Activated CD4-positive, alpha-beta T cell treated with anti-CD3 and anti-CD28 coated beads for 36 hours (primary cell): ENCODE measurements at regions of chr5 and their contacts with region 1.

Region 1: DNA sequence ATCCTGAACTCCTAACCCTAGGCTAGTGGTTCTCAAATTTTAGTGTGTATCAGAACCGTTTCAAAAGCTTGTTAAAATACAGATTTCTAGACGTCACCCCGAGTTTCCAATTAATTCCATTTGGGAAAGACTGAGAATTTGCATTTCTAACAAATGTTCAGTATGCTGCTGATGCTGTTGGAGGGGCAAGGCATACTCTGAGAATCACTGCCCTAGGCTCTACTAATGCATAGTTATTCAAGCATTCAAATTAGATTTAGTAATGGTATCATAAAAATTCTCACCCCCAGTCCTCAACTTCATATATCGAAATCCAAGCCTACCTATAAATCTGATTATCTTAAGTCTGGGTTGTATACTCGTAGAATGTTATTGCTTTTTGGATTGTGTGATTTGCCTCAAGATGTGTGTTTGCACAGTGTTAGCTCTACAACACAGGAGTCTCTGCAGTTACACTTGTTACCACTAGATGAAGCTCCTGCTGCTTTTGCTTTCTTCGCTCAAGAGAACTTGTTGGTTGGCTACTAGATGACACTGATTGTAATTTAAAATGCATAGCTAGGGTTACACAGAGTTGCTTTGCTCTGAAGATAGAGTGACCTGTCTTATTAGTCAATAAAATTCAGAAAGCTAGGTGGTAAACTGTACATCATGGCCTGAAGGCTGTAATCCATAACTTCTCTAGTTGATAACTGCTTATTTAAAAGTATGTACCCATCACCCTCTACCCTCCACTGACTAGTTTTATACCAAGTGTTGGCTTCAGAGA is 7.5 kb upstream of the ERAP2 start:
- DNase-seq: no peak
- ATAC-seq: peak; percentile 81
- H3K4me3 Mint-ChIP-seq: no peak overlapping the region
- H3K27ac Mint-ChIP-seq: peak overlapping the region; percentile 90
- H3K4me1 Mint-ChIP-seq: peaks cover 54% of the 10 kb centered on the region
- H3K27me3 Mint-ChIP-seq: peaks cover 1% of the 10 kb centered on the region

Region 2: GRCh38 chr5:96582343-96582742 is 286.4 kb before region 1 on chr5:
- CTCF ChIA-PET with region 1: no interaction called
- POLR2A ChIA-PET with region 1: no interaction called
- intact Hi-C with region 1: no loop called
- DNase-seq: no peak
- ATAC-seq: no peak
- H3K4me3 Mint-ChIP-seq: no peak overlapping the region
- H3K27ac Mint-ChIP-seq: no peak overlapping the region
- H3K4me1 Mint-ChIP-seq: peaks cover 6% of the 10 kb centered on the region
- H3K27me3 Mint-ChIP-seq: peaks cover 15% of the 10 kb centered on the region

Region 3: DNA sequence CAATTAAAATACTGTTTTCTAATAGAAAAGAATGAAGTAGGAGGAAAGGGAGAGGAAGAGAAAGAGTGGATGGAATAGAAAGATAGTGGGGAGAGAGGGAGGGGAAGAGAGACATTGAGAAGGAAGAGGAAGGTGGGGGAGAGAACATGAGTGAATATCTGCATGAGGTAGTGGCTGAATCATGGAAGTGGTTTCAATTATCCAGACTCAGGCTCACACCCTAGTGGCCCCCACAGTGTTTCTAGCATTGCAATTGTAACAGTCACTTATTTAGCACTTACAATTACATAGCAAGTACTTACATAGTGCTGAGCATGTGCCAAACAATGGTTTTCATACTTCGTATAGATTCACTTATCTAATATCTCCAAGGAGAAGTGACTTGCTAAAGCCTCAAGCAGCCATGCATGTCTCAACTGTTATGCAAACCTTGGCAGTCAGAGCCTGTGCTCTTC is 133.9 kb before region 1 on chr5:
- CTCF ChIA-PET with region 1: no interaction called
- POLR2A ChIA-PET with region 1: no interaction called
- intact Hi-C with region 1: no loop called
- DNase-seq: no peak
- ATAC-seq: no peak
- H3K4me3 Mint-ChIP-seq: no peak overlapping the region
- H3K27ac Mint-ChIP-seq: no peak overlapping the region
- H3K4me1 Mint-ChIP-seq: peaks cover 7% of the 10 kb centered on the region
- H3K27me3 Mint-ChIP-seq: no peaks in the 10 kb centered on the region

Region 4: DNA sequence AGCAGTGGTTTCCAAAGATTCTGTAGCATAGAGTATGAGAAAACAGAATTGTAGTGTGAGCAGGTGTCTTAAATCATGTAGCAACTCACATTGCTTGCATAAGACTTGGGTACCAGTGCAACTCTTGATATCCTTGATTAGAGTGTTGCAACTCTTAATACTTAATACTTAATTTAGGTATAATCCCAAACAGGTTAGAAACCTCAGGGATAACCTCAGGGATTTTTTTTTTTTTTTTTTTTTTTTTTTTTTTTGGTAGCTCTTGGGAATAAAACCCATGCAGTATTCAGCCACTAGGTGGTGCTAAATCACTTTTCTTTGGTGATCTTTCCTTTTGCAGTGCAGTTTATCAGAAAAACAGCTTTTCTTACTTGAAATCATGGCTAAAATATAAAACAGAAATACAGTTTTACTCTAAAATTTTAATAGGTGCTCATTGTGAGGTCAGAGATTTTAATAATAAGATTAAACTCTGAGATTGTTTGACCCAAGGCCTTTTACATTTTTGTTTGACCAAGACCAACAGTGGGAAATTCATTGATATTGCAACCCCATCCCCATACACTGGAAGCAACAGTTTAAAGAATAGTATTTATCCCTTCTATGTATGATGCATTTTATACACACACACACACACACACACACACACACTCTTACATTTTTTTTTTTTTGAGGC is 116.3 kb before region 1 on chr5:
- CTCF ChIA-PET with region 1: interaction called, 14 read pairs
- POLR2A ChIA-PET with region 1: no interaction called
- intact Hi-C with region 1: loop called in 1 of 2 experiments (anchors 1 kb)
- DNase-seq: peak; percentile 36
- ATAC-seq: no peak
- H3K4me3 Mint-ChIP-seq: no peak overlapping the region
- H3K27ac Mint-ChIP-seq: no peak overlapping the region
- H3K4me1 Mint-ChIP-seq: peaks cover 18% of the 10 kb centered on the region
- H3K27me3 Mint-ChIP-seq: no peaks in the 10 kb centered on the region

Region 5: GRCh38 chr5:96885518-96886338 is 16.9 kb after region 1 on chr5:
- CTCF ChIA-PET with region 1: interaction called, 11 read pairs
- POLR2A ChIA-PET with region 1: interaction called, 8 read pairs
- intact Hi-C with region 1: no loop called
- DNase-seq: peak; percentile 49
- ATAC-seq: peak; percentile 85
- H3K4me3 Mint-ChIP-seq: peak overlapping the region; percentile 32
- H3K27ac Mint-ChIP-seq: peak overlapping the region; percentile 89
- H3K4me1 Mint-ChIP-seq: peaks cover 52% of the 10 kb centered on the region
- H3K27me3 Mint-ChIP-seq: no peaks in the 10 kb centered on the region

Region 6: DNA sequence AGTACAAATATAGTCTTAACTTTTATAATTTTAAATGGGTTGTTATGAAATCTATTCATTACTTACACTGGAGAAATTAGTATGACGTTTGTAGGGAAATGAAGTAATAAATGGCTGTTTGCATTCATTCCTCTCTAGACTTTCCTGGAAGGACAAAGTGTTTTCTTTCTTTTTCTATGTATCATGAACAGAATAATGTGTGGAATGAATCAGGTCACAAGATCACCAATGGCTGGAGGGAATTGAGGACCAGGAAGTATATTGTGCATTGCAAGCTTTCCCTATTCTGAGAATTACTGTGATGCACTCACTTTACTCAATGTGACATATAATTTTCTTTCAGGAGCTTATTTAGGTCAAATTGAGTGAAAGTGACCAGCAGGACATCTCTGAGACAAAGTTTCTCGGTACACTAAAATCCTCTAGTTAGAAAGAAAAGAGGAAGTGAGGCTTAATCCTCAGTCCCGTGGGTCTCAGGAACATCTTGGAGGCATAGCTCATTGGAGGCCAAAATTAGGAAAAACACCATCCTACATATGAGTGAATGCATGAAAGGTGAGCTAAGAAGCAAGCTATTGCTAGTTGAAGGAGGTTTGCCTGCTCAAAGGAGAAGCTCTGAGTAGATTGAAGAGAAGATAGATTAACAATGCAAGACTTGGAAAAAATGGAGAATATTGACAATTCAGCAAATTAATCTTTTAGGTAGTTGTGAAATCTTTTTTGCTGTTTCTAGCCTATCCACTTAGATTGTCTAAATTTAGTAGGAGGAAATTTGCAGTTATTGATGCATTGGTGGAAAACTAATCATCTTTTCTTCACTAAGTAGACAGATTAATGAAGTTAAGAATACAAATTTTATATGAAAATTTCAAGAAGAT is 35.5 kb after region 1 on chr5:
- CTCF ChIA-PET with region 1: interaction called, 13 read pairs
- POLR2A ChIA-PET with region 1: no interaction called
- intact Hi-C with region 1: loop called in 1 of 2 experiments (anchors 5 kb)
- DNase-seq: no peak
- ATAC-seq: peak; percentile 61
- H3K4me3 Mint-ChIP-seq: no peak overlapping the region
- H3K27ac Mint-ChIP-seq: no peak overlapping the region
- H3K4me1 Mint-ChIP-seq: peaks cover 9% of the 10 kb centered on the region
- H3K27me3 Mint-ChIP-seq: no peaks in the 10 kb centered on the region

Region 7: GRCh38 chr5:96963267-96963666 is 94.5 kb after region 1 on chr5:
- CTCF ChIA-PET with region 1: interaction called, 14 read pairs
- POLR2A ChIA-PET with region 1: no interaction called
- intact Hi-C with region 1: no loop called
- DNase-seq: peak; percentile 46
- ATAC-seq: peak; percentile 76
- H3K4me3 Mint-ChIP-seq: peak overlapping the region; percentile 64
- H3K27ac Mint-ChIP-seq: peak overlapping the region; percentile 97
- H3K4me1 Mint-ChIP-seq: peaks cover 75% of the 10 kb centered on the region
- H3K27me3 Mint-ChIP-seq: no peaks in the 10 kb centered on the region

Region 8: DNA sequence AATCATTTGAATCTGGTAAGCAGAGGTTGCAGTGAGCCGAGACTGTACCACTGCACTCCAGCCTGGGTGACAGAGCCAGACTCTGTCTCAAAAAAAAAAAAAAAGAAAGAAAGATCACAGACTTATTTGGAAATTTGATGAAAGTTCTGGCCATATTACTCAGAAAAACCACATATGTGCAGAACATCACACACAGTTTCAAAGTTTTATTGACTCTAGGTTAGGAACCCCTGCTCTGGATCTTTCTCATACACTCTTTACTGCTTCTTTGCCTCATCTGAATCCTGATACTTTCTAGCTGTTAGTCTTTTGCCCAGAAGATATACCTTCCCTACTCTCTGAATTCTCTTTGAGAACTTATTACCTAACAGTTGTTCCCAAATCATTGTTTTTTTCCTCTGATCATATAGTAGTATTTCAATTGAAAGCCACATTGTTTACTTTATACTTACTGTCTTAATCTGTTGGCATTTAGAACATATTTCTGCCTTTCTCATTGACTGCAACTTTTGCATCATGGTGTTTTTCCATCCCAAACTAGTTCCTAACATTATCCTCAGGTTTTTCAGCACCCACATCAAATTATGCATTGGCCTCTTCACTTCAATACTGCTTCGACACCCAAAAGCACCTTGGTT is 135.8 kb after region 1 on chr5:
- CTCF ChIA-PET with region 1: interaction called, 3 read pairs
- POLR2A ChIA-PET with region 1: no interaction called
- intact Hi-C with region 1: loop called (anchors 5 kb)
- DNase-seq: peak; percentile 39
- ATAC-seq: peak; percentile 85
- H3K4me3 Mint-ChIP-seq: no peak overlapping the region
- H3K27ac Mint-ChIP-seq: peak overlapping the region; percentile 84
- H3K4me1 Mint-ChIP-seq: peaks cover 15% of the 10 kb centered on the region
- H3K27me3 Mint-ChIP-seq: no peaks in the 10 kb centered on the region

Region 9: GRCh38 chr5:97142521-97143254 is 273.9 kb after region 1 on chr5 and contains the start of gene LIX1:
- CTCF ChIA-PET with region 1: interaction called, 18 read pairs
- POLR2A ChIA-PET with region 1: no interaction called
- intact Hi-C with region 1: loop called (anchors 1 to 5 kb)
- DNase-seq: peak; percentile 55
- ATAC-seq: peak; percentile 84
- H3K4me3 Mint-ChIP-seq: no peak within 1 kb of the TSS
- H3K27ac Mint-ChIP-seq: no peak within 1 kb of the TSS
- H3K4me1 Mint-ChIP-seq: no peaks in the 10 kb centered on the region
- H3K27me3 Mint-ChIP-seq: peaks cover 3% of the 10 kb centered on the region
- total RNA-seq, gene LIX1: not detected